Naive thymus-derived CD4-positive, alpha-beta T cell (primary cell): ENCODE measurements at regions of chr18 and their contacts with region 1.

Region 1: DNA sequence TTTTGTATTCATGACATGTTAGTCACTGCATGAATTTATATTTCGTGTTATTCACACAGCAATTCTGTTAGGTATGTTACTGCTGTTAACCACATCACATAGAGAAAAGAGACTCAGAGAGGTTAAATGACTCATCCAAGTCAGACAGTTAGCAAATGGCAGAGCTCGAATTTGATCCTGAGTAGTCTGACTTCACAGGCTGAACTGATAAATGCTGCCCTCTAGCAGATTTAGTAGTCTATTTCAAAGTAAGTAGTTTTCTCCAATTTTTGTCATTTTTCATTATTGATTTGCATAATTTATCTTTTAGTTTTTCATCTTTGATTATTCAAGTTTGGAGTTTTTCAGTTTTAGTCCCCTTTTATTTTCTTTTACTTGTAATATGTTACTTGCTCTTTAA is 58.3 kb downstream of the WDR7 start:
- DNase-seq: peak in 7 of 9 donors; percentile 18 to 56 (median 48)
- ATAC-seq: peak; percentile 100
- H3K4me3 ChIP-seq: no peak overlapping the region
- H3K4me3 Mint-ChIP-seq: no peak overlapping the region
- H3K27ac ChIP-seq: no peak overlapping the region
- H3K27ac Mint-ChIP-seq: no peak overlapping the region
- H3K4me1 ChIP-seq: no peaks in the 10 kb centered on the region
- H3K4me1 Mint-ChIP-seq: peaks cover 0 to 13% (median 4%) of the 10 kb centered on the region in 7 donors
- H3K27me3 ChIP-seq: no peaks in the 10 kb centered on the region
- H3K27me3 Mint-ChIP-seq: no peaks in the 10 kb centered on the region

Region 2: GRCh38 chr18:54860941-54861340 is 1848.5 kb before region 1 on chr18:
- CTCF ChIA-PET with region 1: no interaction called
- POLR2A ChIA-PET with region 1: no interaction called
- intact Hi-C with region 1: no loop called
- DNase-seq: no peak
- ATAC-seq: no peak
- H3K4me3 ChIP-seq: no peak overlapping the region
- H3K4me3 Mint-ChIP-seq: no peak overlapping the region
- H3K27ac ChIP-seq: no peak overlapping the region
- H3K27ac Mint-ChIP-seq: no peak overlapping the region
- H3K4me1 ChIP-seq: no peaks in the 10 kb centered on the region
- H3K4me1 Mint-ChIP-seq: peaks cover 0 to 3% (median 0%) of the 10 kb centered on the region in 7 donors
- H3K27me3 ChIP-seq: no peaks in the 10 kb centered on the region
- H3K27me3 Mint-ChIP-seq: no peaks in the 10 kb centered on the region

Region 3: GRCh38 chr18:56565551-56566345 is 143.7 kb before region 1 on chr18:
- CTCF ChIA-PET with region 1: no interaction called
- POLR2A ChIA-PET with region 1: no interaction called
- intact Hi-C with region 1: no loop called
- DNase-seq: no peak
- ATAC-seq: no peak
- H3K4me3 ChIP-seq: no peak overlapping the region
- H3K4me3 Mint-ChIP-seq: no peak overlapping the region
- H3K27ac ChIP-seq: no peak overlapping the region
- H3K27ac Mint-ChIP-seq: no peak overlapping the region
- H3K4me1 ChIP-seq: no peaks in the 10 kb centered on the region
- H3K4me1 Mint-ChIP-seq: peaks cover 0 to 2% (median 0%) of the 10 kb centered on the region in 7 donors
- H3K27me3 ChIP-seq: no peaks in the 10 kb centered on the region
- H3K27me3 Mint-ChIP-seq: peaks cover 0 to 3% (median under 1%) of the 10 kb centered on the region in 5 donors

Region 4: DNA sequence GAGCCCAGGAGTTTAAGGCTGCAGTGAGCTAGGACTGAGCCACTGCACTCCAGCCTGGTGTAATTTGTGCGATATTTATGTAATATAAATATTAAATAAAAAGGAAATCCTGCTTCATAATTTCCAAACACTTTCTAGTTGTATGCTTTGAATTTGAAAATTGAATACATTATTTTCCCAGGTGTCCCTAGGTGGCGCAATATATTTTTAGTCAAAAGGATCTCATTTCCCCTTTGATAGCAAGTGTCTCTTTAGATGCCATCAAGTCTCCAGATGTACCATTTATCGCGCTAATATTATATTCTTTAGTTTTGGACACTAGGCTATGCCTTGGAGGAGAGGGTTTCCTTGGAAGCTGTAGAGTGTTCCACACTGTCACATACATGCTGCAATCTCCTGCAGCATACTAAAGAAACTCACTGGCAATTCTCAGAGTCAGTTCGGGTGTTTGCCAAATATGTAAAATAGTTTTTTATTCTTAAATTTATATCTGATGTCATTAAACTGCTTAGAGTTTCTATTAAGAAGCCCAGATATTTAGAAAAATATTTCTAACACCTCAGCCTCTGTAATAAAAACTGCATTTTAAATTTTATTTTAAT is 63.9 kb before region 1 on chr18:
- CTCF ChIA-PET with region 1: interaction called, 5 read pairs
- POLR2A ChIA-PET with region 1: no interaction called
- intact Hi-C with region 1: loop called in 1 of 2 experiments (anchors 1 kb)
- DNase-seq: peak in 6 of 9 donors; percentile 21 to 46 (median 28)
- ATAC-seq: peak; percentile 67
- H3K4me3 ChIP-seq: no peak overlapping the region
- H3K4me3 Mint-ChIP-seq: no peak overlapping the region
- H3K27ac ChIP-seq: no peak overlapping the region
- H3K27ac Mint-ChIP-seq: no peak overlapping the region
- H3K4me1 ChIP-seq: peaks cover 0 to 2% of the 10 kb centered on the region in 2 donors
- H3K4me1 Mint-ChIP-seq: peaks cover 3 to 34% (median 7%) of the 10 kb centered on the region in 7 donors
- H3K27me3 ChIP-seq: no peaks in the 10 kb centered on the region
- H3K27me3 Mint-ChIP-seq: no peaks in the 10 kb centered on the region